ENCODE measurements at regions of chr15 and their contacts with region 1.

Region 1: GRCh38 chr15:85354461-85354860 is 25.9 kb upstream of the AKAP13 start:
- DNase-seq: no peak
- ATAC-seq: no peak
- H3K4me3 ChIP-seq: no peak overlapping the region
- H3K27ac ChIP-seq: no peak overlapping the region
- H3K4me1 ChIP-seq: peaks cover 23% of the 10 kb centered on the region
- H3K27me3 ChIP-seq: no peaks in the 10 kb centered on the region
- CTCF ChIP-seq: no peak

Region 2: DNA sequence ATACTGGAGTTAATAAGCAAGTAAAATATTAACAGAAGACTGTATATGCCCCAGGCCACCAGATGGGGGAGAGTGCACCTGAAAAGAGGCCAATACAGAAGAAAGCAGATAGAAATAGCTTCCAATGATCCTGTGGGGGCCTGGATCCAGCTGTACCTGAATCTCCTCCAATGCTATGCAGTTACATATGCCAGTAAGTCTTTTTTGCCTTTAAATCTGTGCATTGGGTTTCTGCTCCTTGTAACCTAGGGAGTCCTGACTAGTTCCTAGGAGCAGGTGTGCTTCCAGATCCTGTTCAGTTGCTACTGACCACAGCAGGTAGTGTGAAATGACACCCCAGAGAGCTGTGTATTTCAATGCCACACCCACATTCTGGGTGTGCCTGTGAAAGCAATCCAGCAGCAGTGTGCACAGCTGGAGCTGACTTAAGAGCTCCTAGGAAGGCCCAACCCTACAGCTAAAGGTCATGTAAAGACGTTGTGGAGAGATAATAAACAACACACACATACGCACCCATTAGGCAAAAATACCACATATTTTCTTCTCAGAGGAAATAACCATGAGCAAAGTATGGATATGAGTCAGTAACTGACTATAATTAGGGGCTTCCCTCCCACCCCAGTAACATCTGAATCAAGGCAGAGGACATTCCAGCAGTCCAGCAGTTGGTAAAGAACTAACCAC is 36.3 kb before region 1 on chr15:
- CTCF ChIA-PET with region 1: no interaction called
- POLR2A ChIA-PET with region 1: no interaction called
- intact Hi-C with region 1: no loop called
- DNase-seq: peak; percentile 67
- ATAC-seq: peak; percentile 66
- H3K4me3 ChIP-seq: no peak overlapping the region
- H3K27ac ChIP-seq: peak overlapping the region; percentile 61
- H3K4me1 ChIP-seq: peaks cover 21% of the 10 kb centered on the region
- H3K27me3 ChIP-seq: no peaks in the 10 kb centered on the region
- CTCF ChIP-seq: peak; percentile 42; the same call in 1 of the 2 replicates

Region 3: DNA sequence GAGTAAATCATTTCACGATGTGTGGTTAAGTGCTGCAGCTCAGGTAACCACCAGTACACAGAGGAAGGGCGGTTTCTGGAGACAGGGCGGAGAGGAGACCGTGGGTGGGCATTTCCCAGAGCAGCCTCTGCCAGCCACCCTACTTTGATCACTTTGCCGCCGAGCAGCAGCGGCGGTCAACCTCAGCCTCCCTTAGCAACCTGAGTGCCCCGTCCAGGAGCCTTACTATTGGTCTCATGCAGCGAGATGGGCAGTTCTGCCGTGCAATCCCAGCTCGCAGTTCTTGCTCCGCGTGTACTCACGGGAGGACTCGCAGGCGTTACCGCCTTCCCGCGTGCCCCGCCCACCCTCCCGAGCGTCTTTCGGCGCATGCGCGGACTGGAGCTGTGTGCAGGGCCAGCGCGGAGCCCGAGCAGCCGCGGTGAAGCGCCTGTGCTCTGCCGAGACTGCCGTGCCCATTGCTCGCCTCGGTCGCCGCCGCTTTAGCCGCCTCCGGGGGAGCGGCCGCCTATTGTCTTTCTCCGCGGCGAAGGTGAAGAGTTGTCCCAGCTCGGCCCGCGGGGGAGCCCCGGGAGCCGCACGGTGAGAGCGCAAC is 25.9 kb after region 1 on chr15 and contains the start of gene AKAP13:
- CTCF ChIA-PET with region 1: interaction called, 4 read pairs
- POLR2A ChIA-PET with region 1: interaction called, 4 read pairs
- intact Hi-C with region 1: loop called (anchors 1 kb)
- DNase-seq: peak; percentile 99
- ATAC-seq: peak; percentile 88
- H3K4me3 ChIP-seq: peak within 1 kb of the TSS; percentile 78
- H3K27ac ChIP-seq: peak within 1 kb of the TSS; percentile 69
- H3K4me1 ChIP-seq: peaks cover 24% of the 10 kb centered on the region
- H3K27me3 ChIP-seq: no peaks in the 10 kb centered on the region
- CTCF ChIP-seq: no peak
- total RNA-seq, gene AKAP13: 36.8 and 46.8 TPM in 2 replicates